ENCODE measurements at regions of chr3 and their contacts with region 1.

Region 1: GRCh38 chr3:37461485-37462000 is 287.2 kb upstream of the LRRFIP2 start:
- DNase-seq: no peak
- ATAC-seq: no peak
- H3K4me3 ChIP-seq: no peak overlapping the region
- H3K27ac ChIP-seq: no peak overlapping the region
- H3K4me1 ChIP-seq: peaks cover 29% of the 10 kb centered on the region
- H3K27me3 ChIP-seq: no peaks in the 10 kb centered on the region
- CTCF ChIP-seq: no peak

Region 2: DNA sequence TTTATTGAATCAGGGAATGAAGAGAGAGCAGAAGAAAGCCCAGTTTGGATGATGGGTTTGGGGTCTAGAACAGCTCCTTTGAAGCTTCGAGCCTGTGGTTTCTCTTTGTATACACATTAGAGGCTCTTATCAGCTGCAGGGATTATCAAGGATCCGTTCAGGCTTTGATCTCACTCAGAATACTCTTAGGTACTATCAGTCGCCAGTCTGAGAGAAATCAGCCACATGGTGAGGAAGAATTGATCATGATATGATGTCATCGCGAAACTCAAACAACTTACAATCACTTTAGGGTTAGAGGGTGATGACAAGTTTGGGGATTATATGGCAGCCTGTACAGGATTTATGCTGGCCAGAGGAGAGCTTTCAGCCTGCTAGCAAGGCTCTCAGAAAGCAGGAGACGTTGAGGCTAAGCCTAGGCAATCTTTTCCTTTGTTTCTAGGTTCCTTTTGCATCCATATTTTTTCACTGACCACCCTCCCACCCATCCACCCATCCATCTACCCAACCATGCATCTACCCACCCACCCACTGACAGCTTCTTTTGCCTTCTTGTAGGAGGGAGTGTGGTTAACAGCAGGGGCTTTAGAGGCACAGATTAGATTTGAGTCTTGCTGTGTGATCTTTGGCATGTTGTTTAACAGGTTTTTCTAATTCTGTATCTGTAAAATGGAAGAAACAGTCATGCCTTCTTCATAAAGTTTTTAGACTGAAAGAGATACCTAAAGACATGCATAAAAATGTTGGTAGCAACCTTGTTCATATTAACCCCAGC is 43.2 kb after region 1 on chr3:
- intact Hi-C with region 1: loop called in 1 of 2 experiments (anchors 5 kb)
- DNase-seq: no peak
- ATAC-seq: no peak
- H3K4me3 ChIP-seq: no peak overlapping the region
- H3K27ac ChIP-seq: no peak overlapping the region
- H3K4me1 ChIP-seq: no peaks in the 10 kb centered on the region
- H3K27me3 ChIP-seq: no peaks in the 10 kb centered on the region
- CTCF ChIP-seq: no peak

Region 3: DNA sequence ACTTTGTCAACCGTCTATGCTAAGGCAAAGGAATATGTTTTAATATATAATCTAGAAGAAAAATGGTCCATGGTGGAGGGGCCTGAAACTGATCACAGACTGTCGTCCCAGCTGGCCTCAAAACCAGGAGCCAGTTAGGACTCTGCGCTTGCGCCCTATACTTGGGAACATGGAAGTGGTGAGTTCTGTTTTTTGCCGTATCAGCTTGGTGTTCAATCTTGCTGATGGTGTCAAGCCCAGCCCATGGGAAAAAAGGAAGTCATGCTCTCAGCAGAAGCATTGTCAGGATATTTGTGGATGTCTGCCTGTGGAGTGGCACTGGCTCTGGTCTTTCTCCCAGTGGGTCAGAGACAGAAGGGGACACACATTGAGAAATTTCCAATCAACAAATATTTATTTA is 58.1 kb after region 1 on chr3:
- intact Hi-C with region 1: loop called in 1 of 2 experiments (anchors 5 kb)
- DNase-seq: no peak
- ATAC-seq: no peak
- H3K4me3 ChIP-seq: no peak overlapping the region
- H3K27ac ChIP-seq: no peak overlapping the region
- H3K4me1 ChIP-seq: no peaks in the 10 kb centered on the region
- H3K27me3 ChIP-seq: no peaks in the 10 kb centered on the region
- CTCF ChIP-seq: no peak

Measured in psoas muscle (tissue), 8 donors.